Psoas muscle (tissue), 8 donors: ENCODE measurements at regions of chr6 and their contacts with region 1.

Region 1: GRCh38 chr6:131199568-131200272 is 64.5 kb downstream of the AKAP7 start:
- DNase-seq: no peak
- ATAC-seq: peak in 2 of 4 donors; percentile 17 to 42
- H3K4me3 ChIP-seq: no peak overlapping the region
- H3K27ac ChIP-seq: no peak overlapping the region
- H3K4me1 ChIP-seq: no peaks in the 10 kb centered on the region
- H3K27me3 ChIP-seq: no peaks in the 10 kb centered on the region
- CTCF ChIP-seq: peak; percentile 31

Region 2: GRCh38 chr6:131532580-131533039 is 332.9 kb after region 1 on chr6:
- intact Hi-C with region 1: loop called in 1 of 2 experiments (anchors 10 kb)
- DNase-seq: no peak
- ATAC-seq: no peak
- H3K4me3 ChIP-seq: no peak overlapping the region
- H3K27ac ChIP-seq: no peak overlapping the region
- H3K4me1 ChIP-seq: no peaks in the 10 kb centered on the region
- H3K27me3 ChIP-seq: no peaks in the 10 kb centered on the region
- CTCF ChIP-seq: no peak

Region 3: GRCh38 chr6:131627724-131628682 is 428.3 kb after region 1 on chr6 and contains the start of gene MED23:
- intact Hi-C with region 1: no loop called
- DNase-seq: peak; percentile 94 to 96
- ATAC-seq: peak; percentile 98 to 100 (median 99)
- H3K4me3 ChIP-seq: peak within 1 kb of the TSS; percentile 78
- H3K27ac ChIP-seq: peak within 1 kb of the TSS; percentile 78
- H3K4me1 ChIP-seq: peaks cover 6% of the 10 kb centered on the region
- H3K27me3 ChIP-seq: no peaks in the 10 kb centered on the region
- CTCF ChIP-seq: peak; percentile 92
- total RNA-seq, gene MED23: 7.9 to 11.2 (median 9.1) TPM